ENCODE measurements at regions of chr16 and their contacts with region 1.

Region 1: GRCh38 chr16:83946781-83947566 is 6.1 kb upstream of the OSGIN1 start:
- DNase-seq: no peak
- ATAC-seq: no peak; a peak in 1 of 6 replicates
- H3K4me3 ChIP-seq: no peak overlapping the region
- H3K27ac ChIP-seq: peak overlapping the region in 1 of 2 experiments; percentile 2; a peak in 1 of 6 replicates
- H3K4me1 ChIP-seq: peaks cover 6% of the 10 kb centered on the region; the same call in 2 of the 3 replicates
- CTCF ChIP-seq: no peak
- EP300 ChIP-seq: no peak
- POLR2A ChIP-seq: no peak
- RAD21 ChIP-seq: no peak

Region 2: DNA sequence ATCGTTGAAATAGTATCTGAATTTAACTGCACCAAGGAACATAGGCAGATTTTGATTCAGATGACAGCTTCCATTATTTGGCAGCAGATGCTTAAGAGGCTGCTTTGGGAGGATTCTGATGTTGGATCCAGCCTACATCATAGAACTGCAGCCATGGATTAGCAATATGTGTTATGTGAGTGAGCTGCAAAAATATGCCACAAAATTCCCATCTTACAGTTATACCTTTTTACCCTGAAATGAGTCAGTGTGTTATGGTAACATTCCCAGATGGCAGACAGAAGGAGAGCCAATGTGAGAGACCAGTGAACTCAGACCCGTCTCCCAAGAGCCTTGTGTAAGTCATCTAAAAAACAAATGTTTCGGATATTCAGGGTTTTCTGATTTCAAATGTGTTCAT is 1114.2 kb before region 1 on chr16:
- CTCF ChIA-PET with region 1: no interaction called
- POLR2A ChIA-PET with region 1: no interaction called
- DNase-seq: no peak
- ATAC-seq: no peak
- H3K4me3 ChIP-seq: no peak overlapping the region
- H3K27ac ChIP-seq: no peak overlapping the region
- H3K4me1 ChIP-seq: no peaks in the 10 kb centered on the region
- CTCF ChIP-seq: no peak
- EP300 ChIP-seq: no peak
- POLR2A ChIP-seq: no peak
- RAD21 ChIP-seq: no peak

Region 3: DNA sequence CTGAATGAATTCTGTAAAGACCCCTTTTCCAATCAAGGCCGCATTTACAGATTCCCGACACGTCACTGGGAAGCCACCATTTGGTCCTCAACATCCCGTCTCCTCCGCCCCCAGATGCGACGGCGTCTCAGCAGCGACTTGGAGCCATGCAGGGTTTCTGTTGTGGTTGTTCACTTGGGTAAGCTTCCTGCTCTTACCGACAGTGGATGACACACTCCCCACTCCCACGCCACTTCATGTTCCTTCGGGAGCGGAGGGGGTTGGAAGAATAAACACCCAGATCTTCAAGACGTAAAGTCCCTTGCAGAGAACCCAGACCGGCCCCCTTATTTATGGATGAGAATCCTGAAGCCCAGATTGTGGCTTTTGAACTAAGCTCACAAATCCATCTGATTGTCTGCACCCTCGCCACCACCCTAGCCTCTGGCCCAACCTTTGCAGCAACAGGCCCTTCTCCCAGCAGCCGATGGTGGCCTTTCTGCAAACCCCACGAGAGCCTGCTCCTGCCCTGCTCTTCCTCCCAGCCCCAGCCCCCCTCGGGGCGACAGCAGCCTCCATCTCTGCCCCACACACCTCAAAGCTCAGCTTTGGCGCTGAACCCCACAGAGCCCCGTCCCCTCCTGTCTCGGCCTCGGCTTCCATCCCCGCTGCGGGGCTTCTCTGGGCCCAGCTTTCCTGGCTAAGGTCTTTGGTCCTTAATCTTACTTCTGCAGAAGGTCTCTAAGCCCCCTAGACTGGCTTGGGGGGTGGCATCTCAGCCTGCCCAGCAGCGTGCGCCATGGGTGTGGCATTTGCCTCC is 12.9 kb before region 1 on chr16:
- CTCF ChIA-PET with region 1: interaction called, 73 read pairs
- POLR2A ChIA-PET with region 1: no interaction called
- DNase-seq: no peak
- ATAC-seq: no peak
- H3K4me3 ChIP-seq: no peak overlapping the region
- H3K27ac ChIP-seq: no peak overlapping the region
- H3K4me1 ChIP-seq: no peaks in the 10 kb centered on the region
- CTCF ChIP-seq: no peak
- EP300 ChIP-seq: no peak
- POLR2A ChIP-seq: no peak
- RAD21 ChIP-seq: no peak